CD8-positive, alpha-beta memory T cell (primary cell): ENCODE measurements at regions of chr12 and their contacts with region 1.

Region 1: DNA sequence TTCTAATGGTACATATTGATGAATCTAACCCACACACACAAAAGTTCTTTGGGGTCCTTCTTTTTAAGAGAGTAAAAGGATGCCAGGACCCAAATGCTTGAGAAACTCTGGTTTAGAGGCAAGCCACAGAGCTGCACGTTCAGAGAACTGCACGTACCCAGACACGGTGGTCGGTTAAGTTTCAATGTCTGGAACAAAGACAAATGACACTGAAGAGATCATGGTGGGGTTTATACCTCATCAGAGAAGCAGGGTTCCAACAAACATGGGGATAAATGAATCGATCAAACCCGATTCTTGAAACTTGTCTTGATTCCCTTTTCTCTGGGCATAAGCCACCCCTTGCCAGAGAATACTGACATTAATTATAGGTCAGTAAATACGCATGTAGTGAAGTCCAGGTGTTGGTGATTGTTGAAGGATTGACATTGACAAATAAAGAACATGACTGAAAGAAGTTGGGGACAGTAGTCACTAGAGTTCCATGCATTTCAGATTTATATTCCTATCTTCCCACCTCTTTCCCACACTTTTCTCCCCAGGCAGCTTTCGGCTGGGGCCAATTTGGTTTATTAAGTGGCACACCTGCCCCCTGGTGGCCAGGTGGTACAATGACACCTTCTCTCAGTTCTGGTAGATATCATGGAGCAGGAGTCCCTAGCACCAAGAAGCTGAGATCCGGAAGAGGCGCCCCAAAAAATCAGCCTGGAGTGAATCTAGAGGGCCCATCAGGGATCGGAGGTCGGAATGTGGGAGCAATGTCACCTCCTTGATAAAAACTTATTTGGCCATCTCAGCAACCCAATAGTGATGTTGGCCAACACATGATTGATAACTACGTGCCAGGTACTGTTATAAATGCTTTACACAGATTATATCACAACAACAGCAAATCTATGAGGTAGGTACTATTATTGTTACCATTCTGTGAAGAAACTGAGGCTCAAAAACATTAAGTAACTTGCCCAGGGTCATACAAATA is 17.8 kb upstream of the HDAC7 start:
- DNase-seq: peak; percentile 52 to 77 (median 63)
- H3K4me3 ChIP-seq: no peak overlapping the region
- H3K4me3 Mint-ChIP-seq: no peak overlapping the region
- H3K27ac ChIP-seq: no peak overlapping the region
- H3K27ac Mint-ChIP-seq: peak overlapping the region in 4 of 8 donors; percentile 2 to 16 (median 3)
- H3K4me1 ChIP-seq: peaks cover 37% of the 10 kb centered on the region
- H3K4me1 Mint-ChIP-seq: peaks cover 34 to 58% (median 39%) of the 10 kb centered on the region in 3 donors
- H3K27me3 ChIP-seq: no peaks in the 10 kb centered on the region
- H3K27me3 Mint-ChIP-seq: peaks cover 0 to 3% of the 10 kb centered on the region in 2 donors

Region 2: GRCh38 chr12:47715393-47715876 is 122.0 kb before region 1 on chr12:
- CTCF ChIA-PET with region 1: interaction called, 38 read pairs
- POLR2A ChIA-PET with region 1: no interaction called
- DNase-seq: peak; percentile 70 to 84 (median 74)
- H3K4me3 ChIP-seq: no peak overlapping the region
- H3K4me3 Mint-ChIP-seq: no peak overlapping the region
- H3K27ac ChIP-seq: no peak overlapping the region
- H3K27ac Mint-ChIP-seq: peak overlapping the region in 4 of 8 donors; percentile 5 to 69 (median 17)
- H3K4me1 ChIP-seq: peaks cover 21% of the 10 kb centered on the region
- H3K4me1 Mint-ChIP-seq: peaks cover 6 to 16% (median 16%) of the 10 kb centered on the region in 3 donors
- H3K27me3 ChIP-seq: no peaks in the 10 kb centered on the region
- H3K27me3 Mint-ChIP-seq: peaks cover 0 to 2% of the 10 kb centered on the region in 2 donors

Region 3: DNA sequence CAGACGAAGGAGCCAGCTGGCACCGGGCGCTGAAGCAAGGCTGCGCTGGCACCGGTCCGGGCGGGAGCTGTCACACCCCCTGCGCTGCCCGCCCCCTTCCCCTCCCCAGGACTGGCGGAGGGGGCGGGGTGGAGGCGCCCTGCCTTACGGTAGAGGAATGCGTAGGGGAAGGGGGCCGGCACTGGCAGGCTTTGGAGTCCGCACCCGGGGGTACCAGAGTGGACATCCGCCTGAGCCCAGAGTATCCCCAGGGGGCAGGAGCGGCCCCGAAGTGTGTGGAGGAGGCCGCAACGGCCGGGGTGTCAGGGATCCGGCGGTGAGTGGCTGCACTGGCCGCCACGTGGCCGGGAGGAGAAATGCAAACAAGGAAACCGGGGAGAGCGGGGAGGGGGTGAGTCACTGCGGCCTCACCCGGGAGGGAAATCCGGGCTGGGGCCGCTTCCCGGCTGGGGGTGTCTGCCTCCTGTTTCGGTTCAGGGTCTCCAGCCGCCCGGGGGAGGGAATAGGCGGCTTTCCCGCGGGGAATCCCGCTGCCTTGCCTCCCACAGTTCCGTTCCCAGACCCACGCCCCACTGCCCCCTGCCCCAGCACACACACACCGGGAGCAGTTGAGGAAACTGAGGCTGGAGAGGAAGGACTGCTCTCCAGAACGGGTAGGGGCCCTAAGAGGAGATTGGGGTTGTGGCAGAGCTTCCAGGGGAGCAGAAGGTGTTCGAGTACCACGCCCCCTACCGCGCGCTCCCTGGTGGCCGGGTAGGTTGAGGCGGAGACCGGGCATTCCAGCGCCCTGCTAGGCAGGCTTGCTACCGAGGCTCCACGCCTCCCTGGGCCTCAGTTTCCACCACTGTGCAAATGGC is 78.4 kb before region 1 on chr12 and contains the start of gene RAPGEF3:
- CTCF ChIA-PET with region 1: interaction called, 11 read pairs
- POLR2A ChIA-PET with region 1: no interaction called
- DNase-seq: peak; percentile 51 to 80 (median 60)
- H3K4me3 ChIP-seq: peak within 1 kb of the TSS; percentile 66
- H3K4me3 Mint-ChIP-seq: peak within 1 kb of the TSS; percentile 68 to 90 (median 75)
- H3K27ac ChIP-seq: peak within 1 kb of the TSS; percentile 31
- H3K27ac Mint-ChIP-seq: peak within 1 kb of the TSS in 3 of 8 donors; percentile 23 to 56 (median 50)
- H3K4me1 ChIP-seq: peaks cover 11% of the 10 kb centered on the region
- H3K4me1 Mint-ChIP-seq: peaks cover 11 to 31% (median 15%) of the 10 kb centered on the region in 3 donors
- H3K27me3 ChIP-seq: no peaks in the 10 kb centered on the region
- H3K27me3 Mint-ChIP-seq: no peaks in the 10 kb centered on the region
- total RNA-seq, gene RAPGEF3: 0.95 to 1.1 TPM

Region 4: GRCh38 chr12:47773062-47773857 is 64.2 kb before region 1 on chr12 and contains the start of gene SLC48A1:
- CTCF ChIA-PET with region 1: interaction called, 147 read pairs
- POLR2A ChIA-PET with region 1: interaction called, 3 read pairs
- DNase-seq: peak; percentile 59 to 79 (median 71)
- H3K4me3 ChIP-seq: peak within 1 kb of the TSS; percentile 54
- H3K4me3 Mint-ChIP-seq: peak within 1 kb of the TSS; percentile 84 to 92 (median 86)
- H3K27ac ChIP-seq: peak within 1 kb of the TSS; percentile 74
- H3K27ac Mint-ChIP-seq: peak within 1 kb of the TSS in 7 of 8 donors; percentile 51 to 88 (median 73)
- H3K4me1 ChIP-seq: peaks cover 15% of the 10 kb centered on the region
- H3K4me1 Mint-ChIP-seq: peaks cover 14 to 18% (median 16%) of the 10 kb centered on the region in 3 donors
- H3K27me3 ChIP-seq: no peaks in the 10 kb centered on the region
- H3K27me3 Mint-ChIP-seq: peaks cover 0 to 4% of the 10 kb centered on the region in 2 donors
- total RNA-seq, gene SLC48A1: 10.9 to 11.5 TPM

Region 5: GRCh38 chr12:47797441-47797840 is 40.0 kb before region 1 on chr12:
- CTCF ChIA-PET with region 1: interaction called, 452 read pairs
- POLR2A ChIA-PET with region 1: no interaction called
- DNase-seq: peak in 4 of 5 donors; percentile 16 to 66 (median 54)
- H3K4me3 ChIP-seq: no peak overlapping the region
- H3K4me3 Mint-ChIP-seq: no peak overlapping the region
- H3K27ac ChIP-seq: no peak overlapping the region
- H3K27ac Mint-ChIP-seq: peak overlapping the region in 3 of 8 donors; percentile 28 to 84 (median 61)
- H3K4me1 ChIP-seq: peaks cover 34% of the 10 kb centered on the region
- H3K4me1 Mint-ChIP-seq: peaks cover 17 to 34% (median 29%) of the 10 kb centered on the region in 3 donors
- H3K27me3 ChIP-seq: no peaks in the 10 kb centered on the region
- H3K27me3 Mint-ChIP-seq: no peaks in the 10 kb centered on the region

Region 6: GRCh38 chr12:47850153-47851084 is 12.9 kb after region 1 on chr12:
- CTCF ChIA-PET with region 1: interaction called, 10 read pairs
- POLR2A ChIA-PET with region 1: no interaction called
- DNase-seq: no peak
- H3K4me3 ChIP-seq: no peak overlapping the region
- H3K4me3 Mint-ChIP-seq: no peak overlapping the region
- H3K27ac ChIP-seq: no peak overlapping the region
- H3K27ac Mint-ChIP-seq: no peak overlapping the region
- H3K4me1 ChIP-seq: no peaks in the 10 kb centered on the region
- H3K4me1 Mint-ChIP-seq: no peaks in the 10 kb centered on the region
- H3K27me3 ChIP-seq: no peaks in the 10 kb centered on the region
- H3K27me3 Mint-ChIP-seq: no peaks in the 10 kb centered on the region

Region 7: GRCh38 chr12:47863467-47863866 is 26.0 kb after region 1 on chr12:
- CTCF ChIA-PET with region 1: no interaction called
- POLR2A ChIA-PET with region 1: no interaction called
- DNase-seq: no peak
- H3K4me3 ChIP-seq: no peak overlapping the region
- H3K4me3 Mint-ChIP-seq: no peak overlapping the region
- H3K27ac ChIP-seq: no peak overlapping the region
- H3K27ac Mint-ChIP-seq: no peak overlapping the region
- H3K4me1 ChIP-seq: no peaks in the 10 kb centered on the region
- H3K4me1 Mint-ChIP-seq: peaks cover 0 to 2% (median 0%) of the 10 kb centered on the region in 3 donors
- H3K27me3 ChIP-seq: no peaks in the 10 kb centered on the region
- H3K27me3 Mint-ChIP-seq: no peaks in the 10 kb centered on the region

Region 8: GRCh38 chr12:48092611-48093010 is 255.1 kb after region 1 on chr12:
- CTCF ChIA-PET with region 1: no interaction called
- POLR2A ChIA-PET with region 1: no interaction called
- DNase-seq: no peak
- H3K4me3 ChIP-seq: no peak overlapping the region
- H3K4me3 Mint-ChIP-seq: no peak overlapping the region
- H3K27ac ChIP-seq: no peak overlapping the region
- H3K27ac Mint-ChIP-seq: no peak overlapping the region
- H3K4me1 ChIP-seq: no peaks in the 10 kb centered on the region
- H3K4me1 Mint-ChIP-seq: peaks cover 4 to 7% (median 4%) of the 10 kb centered on the region in 3 donors
- H3K27me3 ChIP-seq: no peaks in the 10 kb centered on the region
- H3K27me3 Mint-ChIP-seq: no peaks in the 10 kb centered on the region